Activated T-helper 1 cell treated with anti-CD3 and anti-CD28 coated beads, Interleukin-12 subunit alpha, Interleukin-12 subunit beta, Interleukin-2, Interleukin-4 antibody, amounts not matched to agents 30 ng/mL and 10 ng/mL and 1 ng/mL, durations not matched to agents 14 hours and 24 hours and 36 hours (primary cell): ENCODE measurements at regions of chr1 and their contacts with region 1.

Region 1: GRCh38 chr1:151008190-151008860 is at the start of gene PRUNE1:
- DNase-seq: peak; percentile 94
- H3K4me3 Mint-ChIP-seq: peak within 1 kb of the TSS; percentile 100
- H3K27ac Mint-ChIP-seq: peak within 1 kb of the TSS; percentile 96
- H3K4me1 Mint-ChIP-seq: peaks cover 79% of the 10 kb centered on the region
- H3K27me3 Mint-ChIP-seq: no peaks in the 10 kb centered on the region
- total RNA-seq, gene PRUNE1: 15.0 and 15.4 TPM in 2 replicates

Region 2: GRCh38 chr1:150486964-150487762 is 521.2 kb before region 1 on chr1 and contains the start of gene TARS2:
- intact Hi-C with region 1: loop called (anchors 5 kb)
- DNase-seq: peak; percentile 94
- H3K4me3 Mint-ChIP-seq: peak within 1 kb of the TSS; percentile 98
- H3K27ac Mint-ChIP-seq: peak within 1 kb of the TSS; percentile 95
- H3K4me1 Mint-ChIP-seq: peaks cover 35% of the 10 kb centered on the region
- H3K27me3 Mint-ChIP-seq: no peaks in the 10 kb centered on the region
- total RNA-seq, gene TARS2: 77.3 and 77.4 TPM in 2 replicates

Region 3: GRCh38 chr1:150979092-150980056 is 29.0 kb before region 1 on chr1:
- intact Hi-C with region 1: loop called (anchors 1 kb)
- DNase-seq: peak; percentile 80
- H3K4me3 Mint-ChIP-seq: no peak overlapping the region
- H3K27ac Mint-ChIP-seq: no peak overlapping the region
- H3K4me1 Mint-ChIP-seq: peaks cover 32% of the 10 kb centered on the region
- H3K27me3 Mint-ChIP-seq: no peaks in the 10 kb centered on the region

Region 4: DNA sequence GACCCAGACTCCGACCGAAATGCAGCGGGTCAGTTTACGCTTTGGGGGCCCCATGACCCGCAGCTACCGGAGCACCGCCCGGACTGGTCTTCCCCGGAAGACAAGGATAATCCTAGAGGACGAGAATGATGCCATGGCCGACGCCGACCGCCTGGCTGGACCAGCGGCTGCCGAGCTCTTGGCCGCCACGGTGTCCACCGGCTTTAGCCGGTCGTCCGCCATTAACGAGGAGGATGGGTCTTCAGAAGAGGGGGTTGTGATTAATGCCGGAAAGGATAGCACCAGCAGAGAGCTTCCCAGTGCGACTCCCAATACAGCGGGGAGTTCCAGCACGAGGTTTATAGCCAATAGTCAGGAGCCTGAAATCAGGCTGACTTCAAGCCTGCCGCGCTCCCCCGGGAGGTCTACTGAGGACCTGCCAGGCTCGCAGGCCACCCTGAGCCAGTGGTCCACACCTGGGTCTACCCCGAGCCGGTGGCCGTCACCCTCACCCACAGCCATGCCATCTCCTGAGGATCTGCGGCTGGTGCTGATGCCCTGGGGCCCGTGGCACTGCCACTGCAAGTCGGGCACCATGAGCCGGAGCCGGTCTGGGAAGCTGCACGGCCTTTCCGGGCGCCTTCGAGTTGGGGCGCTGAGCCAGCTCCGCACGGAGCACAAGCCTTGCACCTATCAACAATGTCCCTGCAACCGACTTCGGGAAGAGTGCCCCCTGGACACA is 39.8 kb after region 1 on chr1:
- intact Hi-C with region 1: loop called (anchors 1 kb)
- DNase-seq: peak; percentile 42
- H3K4me3 Mint-ChIP-seq: peak overlapping the region; percentile 86
- H3K27ac Mint-ChIP-seq: peak overlapping the region; percentile 79
- H3K4me1 Mint-ChIP-seq: peaks cover 59% of the 10 kb centered on the region
- H3K27me3 Mint-ChIP-seq: no peaks in the 10 kb centered on the region

Region 5: DNA sequence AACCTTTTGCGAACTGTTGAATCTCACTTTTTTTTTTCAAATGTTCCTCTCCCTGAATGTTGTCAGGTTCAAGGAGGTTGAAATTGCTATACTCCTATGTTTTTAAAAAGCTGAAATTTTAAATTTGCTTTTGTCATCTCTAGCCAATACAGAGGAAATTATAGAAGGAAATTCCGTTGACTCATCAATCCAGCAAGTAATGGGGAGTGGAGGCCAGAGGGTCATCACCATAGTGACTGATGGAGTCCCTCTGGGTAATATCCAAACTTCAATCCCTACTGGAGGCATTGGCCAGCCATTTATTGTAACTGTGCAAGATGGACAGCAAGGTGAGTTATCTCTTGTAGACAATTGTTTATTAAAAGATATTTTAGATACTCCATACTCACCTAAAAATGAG is 98.6 kb after region 1 on chr1:
- intact Hi-C with region 1: no loop called
- DNase-seq: no peak
- H3K4me3 Mint-ChIP-seq: no peak overlapping the region
- H3K27ac Mint-ChIP-seq: no peak overlapping the region
- H3K4me1 Mint-ChIP-seq: no peaks in the 10 kb centered on the region
- H3K27me3 Mint-ChIP-seq: no peaks in the 10 kb centered on the region

Region 6: DNA sequence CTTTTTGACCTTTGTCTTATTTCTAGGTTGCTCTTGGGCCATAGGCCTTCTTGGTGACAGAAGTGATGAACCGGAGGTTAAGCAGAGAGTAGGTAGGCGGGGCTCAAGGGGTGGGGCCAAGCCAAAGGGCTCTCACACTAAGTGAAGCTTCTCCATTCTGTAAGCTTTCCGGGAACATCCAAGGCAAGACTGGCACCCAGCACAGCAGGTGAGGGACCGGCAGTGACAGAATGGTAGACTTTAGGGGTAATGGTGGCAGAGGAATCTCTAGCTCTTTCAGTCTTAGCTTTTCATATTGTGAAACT is 148.1 kb after region 1 on chr1 and contains the start of gene TNFAIP8L2:
- intact Hi-C with region 1: loop called (anchors 1 kb)
- DNase-seq: peak; percentile 72
- H3K4me3 Mint-ChIP-seq: peak within 1 kb of the TSS; percentile 92
- H3K27ac Mint-ChIP-seq: peak within 1 kb of the TSS; percentile 99
- H3K4me1 Mint-ChIP-seq: peaks cover 42% of the 10 kb centered on the region
- H3K27me3 Mint-ChIP-seq: no peaks in the 10 kb centered on the region
- total RNA-seq, gene TNFAIP8L2: 38.0 and 38.5 TPM in 2 replicates